Ascending aorta (tissue), 2 donors: ENCODE measurements at regions of chr12 and their contacts with region 1.

Region 1: GRCh38 chr12:123983822-123984485 is 10.9 kb downstream of the ZNF664 start:
- DNase-seq: no peak
- H3K4me3 ChIP-seq: no peak overlapping the region
- H3K27ac ChIP-seq: no peak overlapping the region
- H3K4me1 ChIP-seq: no peaks in the 10 kb centered on the region
- H3K27me3 ChIP-seq: no peaks in the 10 kb centered on the region
- CTCF ChIP-seq: peak; percentile 39 to 69 (median 58)

Region 2: DNA sequence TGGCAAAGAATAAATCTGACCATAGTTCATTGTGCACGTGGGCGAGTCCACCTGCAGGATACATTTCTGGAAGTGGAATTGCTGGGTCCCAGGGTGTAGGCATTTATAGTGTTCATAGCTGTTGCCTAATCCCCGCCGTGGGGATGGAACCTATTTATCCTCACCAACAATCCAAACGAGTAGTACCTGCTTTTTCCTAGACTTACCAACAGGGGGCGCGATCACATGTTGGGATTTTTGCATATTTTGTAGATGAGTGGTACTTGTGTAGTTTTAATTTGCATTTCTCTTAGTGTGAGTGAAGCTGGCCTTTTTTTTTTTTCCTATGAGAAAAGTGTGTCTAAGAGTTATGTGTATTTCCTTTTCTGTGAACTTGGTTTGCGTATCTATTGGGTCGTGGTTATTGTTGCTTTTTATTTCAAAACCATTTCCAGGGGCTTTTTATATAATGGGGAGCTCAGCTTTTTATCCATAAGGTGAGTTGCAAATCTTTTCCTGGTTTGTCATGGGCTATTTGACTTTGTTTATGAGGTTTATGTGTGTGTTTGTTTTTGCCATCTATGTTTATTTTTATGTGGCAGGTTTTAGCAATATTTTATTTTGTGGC is 78.5 kb before region 1 on chr12:
- intact Hi-C with region 1: loop called (anchors 1 kb)
- DNase-seq: peak in 1 of 2 donors; percentile 81
- H3K4me3 ChIP-seq: no peak overlapping the region
- H3K27ac ChIP-seq: no peak overlapping the region
- H3K4me1 ChIP-seq: no peaks in the 10 kb centered on the region
- H3K27me3 ChIP-seq: no peaks in the 10 kb centered on the region
- CTCF ChIP-seq: peak; percentile 58 to 73 (median 61)

Region 3: GRCh38 chr12:124097701-124098100 is 113.7 kb after region 1 on chr12:
- intact Hi-C with region 1: no loop called
- DNase-seq: no peak
- H3K4me3 ChIP-seq: peak overlapping the region in 1 of 2 donors; percentile 47
- H3K27ac ChIP-seq: peak overlapping the region; percentile 49 to 68
- H3K4me1 ChIP-seq: no peaks in the 10 kb centered on the region
- H3K27me3 ChIP-seq: no peaks in the 10 kb centered on the region
- CTCF ChIP-seq: no peak